Colonic mucosa (tissue), 4 donors: ENCODE measurements at regions of chr5 and their contacts with region 1.

Region 1: GRCh38 chr5:69492391-69492922 is at the start of gene OCLN:
- DNase-seq: peak; percentile 86
- H3K4me3 ChIP-seq: peak within 1 kb of the TSS; percentile 77
- H3K27ac ChIP-seq: peak within 1 kb of the TSS; percentile 97
- H3K4me1 ChIP-seq: no peaks in the 10 kb centered on the region
- H3K27me3 ChIP-seq: peaks cover 4% of the 10 kb centered on the region
- CTCF ChIP-seq: no peak
- total RNA-seq, gene OCLN: 115 to 176 TPM

Region 2: GRCh38 chr5:69414885-69415583 is 77.4 kb before region 1 on chr5 and contains the start of gene MARVELD2:
- intact Hi-C with region 1: loop called (anchors 10 kb)
- DNase-seq: peak; percentile 94
- H3K4me3 ChIP-seq: peak within 1 kb of the TSS; percentile 70
- H3K27ac ChIP-seq: peak within 1 kb of the TSS; percentile 91
- H3K4me1 ChIP-seq: no peaks in the 10 kb centered on the region
- H3K27me3 ChIP-seq: no peaks in the 10 kb centered on the region
- CTCF ChIP-seq: peak; percentile 41
- total RNA-seq, gene MARVELD2: 51.0 to 51.2 TPM